Caco-2 (cell line): ENCODE measurements at regions of chr1 and their contacts with region 1.

Region 1: GRCh38 chr1:158124999-158125398 is 55.7 kb upstream of the CD1D start:
- DNase-seq: peak; percentile 85 to 87
- H3K4me3 ChIP-seq: no peak overlapping the region
- H3K4me3 Mint-ChIP-seq: no peak overlapping the region
- H3K27ac Mint-ChIP-seq: no peak overlapping the region
- H3K4me1 ChIP-seq: no peaks in the 10 kb centered on the region
- H3K4me1 Mint-ChIP-seq: no peaks in the 10 kb centered on the region
- H3K27me3 ChIP-seq: no peaks in the 10 kb centered on the region; the same call in 1 of the 2 replicates
- H3K27me3 Mint-ChIP-seq: peaks cover 3% of the 10 kb centered on the region
- CTCF ChIP-seq: peak; percentile 82 to 88

Region 2: DNA sequence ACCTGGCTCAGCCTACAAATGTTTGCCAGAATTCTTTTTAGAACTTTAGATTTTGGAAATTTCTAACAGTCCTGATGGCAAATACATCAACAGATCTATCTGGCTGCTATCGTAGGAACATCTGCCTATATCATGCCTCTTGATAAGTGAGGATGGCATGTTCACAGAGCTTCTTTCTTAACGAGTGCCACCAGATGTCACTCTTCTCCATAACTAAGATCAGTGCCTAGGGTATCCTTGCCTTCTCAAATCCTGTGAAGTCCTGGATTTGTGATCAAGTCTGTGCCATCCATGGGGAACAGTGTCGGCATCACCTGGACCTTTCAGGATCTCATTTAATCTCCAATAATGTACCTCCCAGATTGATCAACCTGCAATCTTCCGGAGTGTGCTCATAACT is 246.9 kb before region 1 on chr1:
- CTCF ChIA-PET with region 1: interaction called, 13 read pairs
- POLR2A ChIA-PET with region 1: no interaction called
- intact Hi-C with region 1: loop called (anchors 2 kb)
- DNase-seq: peak in 1 of 2 experiments; percentile 35
- H3K4me3 ChIP-seq: no peak overlapping the region
- H3K4me3 Mint-ChIP-seq: no peak overlapping the region
- H3K27ac Mint-ChIP-seq: no peak overlapping the region
- H3K4me1 ChIP-seq: no peaks in the 10 kb centered on the region
- H3K4me1 Mint-ChIP-seq: no peaks in the 10 kb centered on the region
- H3K27me3 ChIP-seq: no peaks in the 10 kb centered on the region
- H3K27me3 Mint-ChIP-seq: peaks cover 9% of the 10 kb centered on the region
- CTCF ChIP-seq: peak; percentile 54 to 61

Region 3: DNA sequence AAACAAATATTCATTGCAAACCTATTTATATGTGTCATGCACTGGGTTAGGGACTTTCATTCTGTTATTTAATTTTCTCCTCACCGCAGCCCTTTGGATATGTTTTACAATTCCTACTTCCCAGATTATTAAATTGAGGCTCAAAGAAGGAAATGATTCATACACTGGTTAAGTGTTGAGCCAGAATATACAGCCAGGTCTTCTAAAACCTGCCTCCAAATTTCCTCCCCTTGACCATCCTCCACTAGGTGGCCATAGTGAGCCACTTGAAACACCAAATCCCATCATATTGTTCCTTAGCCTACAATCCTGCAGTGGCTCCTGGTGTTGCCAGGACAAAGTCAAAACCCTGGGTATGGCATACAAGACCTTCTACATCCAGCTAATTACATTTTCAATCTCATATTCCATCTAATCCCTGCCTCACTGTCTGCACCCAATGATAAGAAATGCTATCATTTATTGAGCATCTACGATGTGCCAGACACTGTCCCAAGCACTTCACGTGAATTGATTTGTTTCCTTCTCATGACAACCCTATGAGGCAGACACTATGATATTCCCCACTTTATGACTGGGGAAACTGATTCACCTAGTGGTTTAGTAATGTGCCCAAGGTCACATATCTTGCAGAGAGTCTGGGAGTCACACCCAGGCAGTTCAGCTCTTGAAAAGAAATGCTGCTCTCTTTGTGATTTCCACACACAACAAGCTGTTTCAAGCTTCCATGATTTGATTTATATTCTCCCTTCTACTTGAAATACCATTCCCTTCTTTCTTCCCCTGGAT is 155.1 kb before region 1 on chr1:
- CTCF ChIA-PET with region 1: interaction called, 106 read pairs
- POLR2A ChIA-PET with region 1: no interaction called
- intact Hi-C with region 1: loop called (anchors 1 kb)
- DNase-seq: peak; percentile 42 to 54
- H3K4me3 ChIP-seq: no peak overlapping the region
- H3K4me3 Mint-ChIP-seq: no peak overlapping the region
- H3K27ac Mint-ChIP-seq: no peak overlapping the region
- H3K4me1 ChIP-seq: peaks cover 19% of the 10 kb centered on the region
- H3K4me1 Mint-ChIP-seq: peaks cover 19% of the 10 kb centered on the region
- H3K27me3 ChIP-seq: no peaks in the 10 kb centered on the region
- H3K27me3 Mint-ChIP-seq: no peaks in the 10 kb centered on the region
- CTCF ChIP-seq: peak; percentile 66 to 74

Region 4: DNA sequence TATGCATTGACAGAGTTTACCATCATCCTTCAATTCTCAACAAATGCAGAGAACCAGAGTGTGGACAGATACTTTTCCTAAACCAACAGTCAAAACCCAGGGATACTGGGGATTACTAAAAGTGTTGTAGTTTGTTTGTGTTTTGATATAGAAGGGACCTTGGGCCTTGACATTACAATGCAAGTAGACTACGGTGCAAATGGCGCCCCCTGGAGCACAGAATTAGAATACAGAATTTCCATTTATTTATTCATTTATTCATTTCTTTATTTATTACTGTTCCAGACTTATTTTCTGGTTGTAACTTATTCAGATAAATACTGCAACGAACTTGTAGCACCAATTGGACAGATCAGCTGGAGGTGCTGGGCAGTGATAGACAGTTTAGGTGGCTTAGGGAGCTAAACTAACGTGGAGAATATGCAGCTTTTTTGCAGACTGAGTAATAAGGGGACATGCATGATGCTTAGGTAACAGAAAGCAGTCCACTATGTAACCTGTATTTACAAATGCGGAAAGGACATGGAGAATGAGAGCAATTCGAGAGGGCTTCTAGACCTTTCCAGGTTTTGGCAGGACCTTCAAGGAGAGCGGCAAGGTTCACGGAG is 88.9 kb before region 1 on chr1:
- CTCF ChIA-PET with region 1: no interaction called
- POLR2A ChIA-PET with region 1: no interaction called
- intact Hi-C with region 1: loop called (anchors 1 kb)
- DNase-seq: peak in 1 of 2 experiments; percentile 41
- H3K4me3 ChIP-seq: no peak overlapping the region
- H3K4me3 Mint-ChIP-seq: no peak overlapping the region
- H3K27ac Mint-ChIP-seq: no peak overlapping the region
- H3K4me1 ChIP-seq: peaks cover 6% of the 10 kb centered on the region
- H3K4me1 Mint-ChIP-seq: peaks cover 8% of the 10 kb centered on the region
- H3K27me3 ChIP-seq: no peaks in the 10 kb centered on the region
- H3K27me3 Mint-ChIP-seq: no peaks in the 10 kb centered on the region
- CTCF ChIP-seq: peak; percentile 50 to 81

Region 5: DNA sequence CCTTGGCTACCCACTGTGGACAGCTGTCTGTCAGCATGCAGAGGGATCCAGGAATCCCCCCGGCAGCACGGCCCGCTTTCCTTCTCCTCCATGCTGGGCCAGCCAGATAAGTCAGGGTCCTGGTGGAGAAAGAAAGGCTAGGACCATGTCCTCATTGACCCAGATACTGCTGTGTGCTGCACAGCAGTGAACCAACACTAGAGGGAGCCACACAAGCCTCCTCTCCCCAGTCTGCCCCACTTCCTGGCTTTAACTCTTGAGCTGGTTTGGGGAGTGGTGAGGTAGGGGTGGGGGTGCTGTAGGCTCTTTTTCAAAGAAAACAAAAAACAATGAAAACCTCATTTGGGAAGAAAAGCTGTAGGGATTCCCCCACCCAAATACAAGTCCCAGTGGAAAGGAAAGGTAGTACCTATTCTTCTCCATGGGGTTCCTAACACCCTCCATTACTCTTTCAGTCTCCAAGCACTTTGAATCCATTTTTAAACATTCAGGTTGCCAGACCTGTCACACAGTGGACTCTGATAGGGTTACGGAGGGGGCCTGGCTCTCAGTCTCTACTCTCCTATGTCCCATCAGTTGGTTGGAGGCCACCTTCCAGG is 29.2 kb before region 1 on chr1:
- CTCF ChIA-PET with region 1: interaction called, 18 read pairs
- POLR2A ChIA-PET with region 1: interaction called, 7 read pairs
- intact Hi-C with region 1: loop called (anchors 1 kb)
- DNase-seq: peak in 1 of 2 experiments; percentile 28
- H3K4me3 ChIP-seq: no peak overlapping the region
- H3K4me3 Mint-ChIP-seq: no peak overlapping the region
- H3K27ac Mint-ChIP-seq: no peak overlapping the region
- H3K4me1 ChIP-seq: peaks cover 19% of the 10 kb centered on the region
- H3K4me1 Mint-ChIP-seq: no peaks in the 10 kb centered on the region
- H3K27me3 ChIP-seq: no peaks in the 10 kb centered on the region
- H3K27me3 Mint-ChIP-seq: no peaks in the 10 kb centered on the region
- CTCF ChIP-seq: peak; percentile 38 to 51

Region 6: DNA sequence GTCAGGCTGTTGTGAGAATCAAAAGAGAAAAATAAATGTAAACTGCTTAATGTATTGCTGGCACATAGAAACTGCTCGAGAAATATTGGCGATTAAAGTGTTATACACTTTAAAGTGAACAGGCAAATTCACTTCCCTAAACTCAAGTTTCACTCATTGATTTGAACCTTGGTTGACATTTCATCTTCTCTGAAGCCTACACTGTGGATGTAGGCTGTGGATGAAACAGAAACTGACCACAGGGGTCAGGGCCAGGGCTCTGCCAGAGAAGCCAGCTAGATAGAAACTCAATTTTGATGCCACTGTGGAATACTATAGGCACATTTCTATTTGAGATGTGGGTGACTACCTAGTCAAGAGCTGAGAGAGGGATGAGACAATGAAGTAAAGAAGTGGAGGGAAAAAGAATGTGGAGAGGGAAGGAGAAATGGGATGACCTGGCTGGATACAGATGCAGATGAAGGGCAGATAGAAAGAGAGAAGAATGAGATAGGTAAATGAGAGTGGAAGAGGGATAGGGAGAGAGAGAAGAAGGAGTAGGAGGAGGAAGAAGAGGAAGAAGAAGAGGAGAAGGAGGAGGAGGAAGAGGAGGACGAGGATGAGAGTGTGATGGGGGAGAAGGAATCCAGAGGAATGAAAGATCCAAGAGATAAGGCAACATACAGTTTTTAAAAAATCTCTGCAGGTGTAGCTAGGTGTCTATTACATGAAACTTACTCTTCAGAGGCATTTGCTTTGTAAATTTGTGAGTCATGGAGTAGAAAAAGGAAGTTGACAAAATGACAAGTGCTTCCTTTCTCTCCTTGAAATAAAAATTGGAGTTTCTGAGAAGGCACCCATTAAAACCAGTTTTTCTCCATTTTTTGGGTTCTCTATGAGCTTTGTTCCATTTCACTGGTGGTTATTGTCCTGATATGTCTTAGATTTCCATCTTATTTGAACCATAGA is 38.3 kb after region 1 on chr1:
- CTCF ChIA-PET with region 1: no interaction called
- POLR2A ChIA-PET with region 1: no interaction called
- intact Hi-C with region 1: no loop called
- DNase-seq: no peak
- H3K4me3 ChIP-seq: no peak overlapping the region
- H3K4me3 Mint-ChIP-seq: no peak overlapping the region
- H3K27ac Mint-ChIP-seq: no peak overlapping the region
- H3K4me1 ChIP-seq: no peaks in the 10 kb centered on the region
- H3K4me1 Mint-ChIP-seq: no peaks in the 10 kb centered on the region
- H3K27me3 ChIP-seq: no peaks in the 10 kb centered on the region; the same call in 1 of the 2 replicates
- H3K27me3 Mint-ChIP-seq: peaks cover 25% of the 10 kb centered on the region
- CTCF ChIP-seq: no peak

Region 7: DNA sequence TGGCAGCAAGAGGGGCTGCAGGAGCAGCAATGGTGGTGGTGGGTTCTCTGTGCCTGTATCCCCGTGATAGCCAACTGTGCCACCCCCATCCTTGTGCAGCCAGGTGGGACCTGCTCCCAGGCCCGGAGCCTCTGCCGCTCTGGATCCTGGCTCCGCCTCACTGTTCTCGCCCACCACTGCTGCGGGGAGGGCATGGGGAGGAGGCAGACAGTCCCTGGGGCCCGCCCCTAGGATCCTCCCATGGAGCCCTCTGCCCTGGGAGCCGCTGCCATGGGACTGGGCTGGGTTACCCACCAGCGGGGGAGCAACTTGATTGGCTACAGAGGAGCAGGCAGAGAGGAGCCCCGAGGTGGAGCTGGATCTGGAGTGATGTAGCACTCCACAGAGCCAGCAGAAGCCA is 87.3 kb after region 1 on chr1:
- CTCF ChIA-PET with region 1: no interaction called
- POLR2A ChIA-PET with region 1: no interaction called
- intact Hi-C with region 1: no loop called
- DNase-seq: no peak
- H3K4me3 ChIP-seq: no peak overlapping the region
- H3K4me3 Mint-ChIP-seq: no peak overlapping the region
- H3K27ac Mint-ChIP-seq: no peak overlapping the region
- H3K4me1 ChIP-seq: no peaks in the 10 kb centered on the region
- H3K4me1 Mint-ChIP-seq: no peaks in the 10 kb centered on the region
- H3K27me3 ChIP-seq: no peaks in the 10 kb centered on the region
- H3K27me3 Mint-ChIP-seq: peaks cover 5% of the 10 kb centered on the region
- CTCF ChIP-seq: no peak

Region 8: DNA sequence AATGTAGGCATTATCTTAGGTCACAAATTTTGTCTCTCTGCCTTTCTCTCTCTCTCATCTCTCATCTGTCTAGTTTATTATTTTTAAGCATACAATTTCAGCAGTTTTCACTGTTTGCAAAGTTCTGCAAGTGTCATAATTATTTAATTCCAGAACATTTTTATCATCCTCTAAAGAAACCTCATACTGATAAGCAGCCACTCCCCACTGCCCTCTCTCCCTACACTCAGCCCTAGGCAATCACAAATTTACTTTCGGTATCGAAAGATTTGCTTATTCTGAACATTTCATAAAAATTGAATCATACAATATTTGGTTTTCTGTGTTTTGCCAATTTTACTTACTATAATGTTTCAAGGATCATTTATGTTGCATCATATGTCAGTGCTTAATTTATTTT is 412.6 kb after region 1 on chr1:
- CTCF ChIA-PET with region 1: no interaction called
- POLR2A ChIA-PET with region 1: no interaction called
- intact Hi-C with region 1: no loop called
- DNase-seq: no peak
- H3K4me3 ChIP-seq: no peak overlapping the region
- H3K4me3 Mint-ChIP-seq: no peak overlapping the region
- H3K27ac Mint-ChIP-seq: no peak overlapping the region
- H3K4me1 ChIP-seq: no peaks in the 10 kb centered on the region
- H3K4me1 Mint-ChIP-seq: no peaks in the 10 kb centered on the region
- H3K27me3 ChIP-seq: no peaks in the 10 kb centered on the region
- H3K27me3 Mint-ChIP-seq: peaks cover 9% of the 10 kb centered on the region
- CTCF ChIP-seq: no peak